B cell (primary cell): ENCODE measurements at regions of chr12 and their contacts with region 1.

Region 1: GRCh38 chr12:69900720-69901131 is 75.7 kb downstream of the MYRFL start:
- DNase-seq: peak; percentile 75
- ATAC-seq: no peak
- H3K4me3 ChIP-seq: no peak overlapping the region
- H3K4me3 Mint-ChIP-seq: no peak overlapping the region
- H3K27ac ChIP-seq: no peak overlapping the region
- H3K27ac Mint-ChIP-seq: no peak overlapping the region
- H3K4me1 ChIP-seq: peaks cover 0 to 5% of the 10 kb centered on the region in 2 donors
- H3K4me1 Mint-ChIP-seq: peaks cover 3% of the 10 kb centered on the region
- H3K27me3 ChIP-seq: no peaks in the 10 kb centered on the region
- H3K27me3 Mint-ChIP-seq: peaks cover 3% of the 10 kb centered on the region
- CTCF ChIP-seq: peak; percentile 92

Region 2: DNA sequence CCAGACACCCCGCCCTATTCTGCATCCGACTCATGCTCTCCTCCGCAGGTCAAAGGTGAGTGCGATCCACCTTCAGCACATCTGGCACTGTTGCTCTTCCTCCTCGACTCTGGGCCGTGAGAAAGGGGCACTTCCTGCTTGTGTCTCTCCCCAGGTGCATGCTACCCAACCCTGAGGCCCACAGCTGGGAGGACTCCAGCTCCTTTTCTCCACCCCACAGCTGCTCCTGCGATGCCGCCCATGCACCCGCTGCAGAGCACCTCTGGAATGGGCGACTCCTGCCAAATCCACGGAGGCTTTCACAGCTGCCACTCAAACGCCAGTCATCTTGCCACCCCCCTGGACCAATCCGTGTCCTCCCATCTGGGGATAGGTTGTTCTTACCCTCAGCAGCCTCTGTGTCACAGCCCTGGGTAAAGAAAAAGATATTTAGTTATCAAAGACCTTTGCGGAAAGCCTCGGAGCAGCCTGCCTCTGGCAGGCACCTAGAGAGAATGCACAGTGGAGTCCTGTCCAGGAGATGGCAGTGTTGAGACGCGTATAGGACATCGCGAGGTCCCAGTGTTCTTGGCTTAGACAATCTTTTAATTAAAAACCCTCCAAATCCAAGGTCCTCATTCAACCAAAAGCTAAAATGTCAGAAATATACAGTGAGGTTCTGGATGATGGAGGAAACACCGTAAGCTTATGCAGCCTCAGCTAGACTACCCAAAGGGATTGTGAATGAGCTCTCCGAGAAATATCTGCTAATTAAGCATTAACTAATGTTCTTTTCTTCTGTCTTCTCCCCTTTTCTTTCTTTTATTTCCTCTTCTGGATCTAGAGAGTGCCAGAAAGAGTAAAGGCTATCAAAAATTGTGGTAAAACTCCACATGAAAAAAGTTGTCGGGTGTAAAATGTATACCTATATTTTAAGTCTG is 21.4 kb before region 1 on chr12:
- CTCF ChIA-PET with region 1: interaction called, 28 read pairs
- POLR2A ChIA-PET with region 1: no interaction called
- intact Hi-C with region 1: no loop called
- DNase-seq: peak; percentile 74
- ATAC-seq: peak; percentile 82
- H3K4me3 ChIP-seq: no peak overlapping the region
- H3K4me3 Mint-ChIP-seq: no peak overlapping the region
- H3K27ac ChIP-seq: no peak overlapping the region
- H3K27ac Mint-ChIP-seq: peak overlapping the region; percentile 50
- H3K4me1 ChIP-seq: peaks cover 4% of the 10 kb centered on the region in 2 donors
- H3K4me1 Mint-ChIP-seq: peaks cover 5% of the 10 kb centered on the region
- H3K27me3 ChIP-seq: peaks cover 0 to 9% (median 2%) of the 10 kb centered on the region in 4 experiments
- H3K27me3 Mint-ChIP-seq: peaks cover 27% of the 10 kb centered on the region
- CTCF ChIP-seq: peak; percentile 89

Region 3: DNA sequence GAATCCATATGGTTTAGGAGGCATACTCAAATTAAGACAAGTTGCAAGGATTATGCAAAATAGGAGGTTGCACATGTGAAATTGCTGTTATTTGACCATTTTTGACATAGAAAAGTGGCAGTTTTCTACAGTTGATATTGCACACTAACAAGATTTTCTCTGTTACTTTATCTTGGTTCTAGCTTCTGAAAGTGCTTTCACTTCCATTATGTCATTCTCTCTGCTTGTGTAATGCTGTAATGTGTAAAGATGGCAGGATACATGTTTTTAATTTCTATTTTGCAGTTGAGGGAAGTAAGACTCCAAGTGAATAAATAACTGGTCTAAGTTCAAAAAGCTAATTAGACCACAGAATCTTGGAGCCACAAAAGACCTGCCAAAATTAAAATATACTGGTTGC is 15.1 kb before region 1 on chr12:
- CTCF ChIA-PET with region 1: interaction called, 28 read pairs
- POLR2A ChIA-PET with region 1: no interaction called
- intact Hi-C with region 1: no loop called
- DNase-seq: no peak
- ATAC-seq: no peak
- H3K4me3 ChIP-seq: no peak overlapping the region
- H3K4me3 Mint-ChIP-seq: no peak overlapping the region
- H3K27ac ChIP-seq: no peak overlapping the region
- H3K27ac Mint-ChIP-seq: no peak overlapping the region
- H3K4me1 ChIP-seq: no peaks in the 10 kb centered on the region
- H3K4me1 Mint-ChIP-seq: no peaks in the 10 kb centered on the region
- H3K27me3 ChIP-seq: no peaks in the 10 kb centered on the region
- H3K27me3 Mint-ChIP-seq: peaks cover 3% of the 10 kb centered on the region
- CTCF ChIP-seq: no peak

Region 4: GRCh38 chr12:70242695-70243509 is 342.2 kb after region 1 on chr12 and contains the start of gene CNOT2:
- CTCF ChIA-PET with region 1: no interaction called
- POLR2A ChIA-PET with region 1: no interaction called
- intact Hi-C with region 1: no loop called
- DNase-seq: peak; percentile 93
- ATAC-seq: peak; percentile 88
- H3K4me3 ChIP-seq: peak within 1 kb of the TSS; percentile 75 to 92 (median 85)
- H3K4me3 Mint-ChIP-seq: peak within 1 kb of the TSS; percentile 96
- H3K27ac ChIP-seq: peak within 1 kb of the TSS; percentile 95 to 98
- H3K27ac Mint-ChIP-seq: peak within 1 kb of the TSS; percentile 97
- H3K4me1 ChIP-seq: peaks cover 20 to 33% of the 10 kb centered on the region in 2 donors
- H3K4me1 Mint-ChIP-seq: peaks cover 57% of the 10 kb centered on the region
- H3K27me3 ChIP-seq: no peaks in the 10 kb centered on the region
- H3K27me3 Mint-ChIP-seq: no peaks in the 10 kb centered on the region
- CTCF ChIP-seq: no peak
- total RNA-seq, gene CNOT2: 115 and 120 TPM in 2 replicates

Region 5: GRCh38 chr12:70576346-70577282 is 675.9 kb after region 1 on chr12:
- CTCF ChIA-PET with region 1: interaction called, 117 read pairs
- POLR2A ChIA-PET with region 1: no interaction called
- intact Hi-C with region 1: loop called (anchors 1 kb)
- DNase-seq: peak; percentile 66
- ATAC-seq: peak; percentile 43
- H3K4me3 ChIP-seq: no peak overlapping the region
- H3K4me3 Mint-ChIP-seq: no peak overlapping the region
- H3K27ac ChIP-seq: no peak overlapping the region
- H3K27ac Mint-ChIP-seq: no peak overlapping the region
- H3K4me1 ChIP-seq: no peaks in the 10 kb centered on the region
- H3K4me1 Mint-ChIP-seq: no peaks in the 10 kb centered on the region
- H3K27me3 ChIP-seq: peaks cover 0 to 2% (median 0%) of the 10 kb centered on the region in 4 experiments
- H3K27me3 Mint-ChIP-seq: peaks cover 4% of the 10 kb centered on the region
- CTCF ChIP-seq: peak; percentile 78

Region 6: DNA sequence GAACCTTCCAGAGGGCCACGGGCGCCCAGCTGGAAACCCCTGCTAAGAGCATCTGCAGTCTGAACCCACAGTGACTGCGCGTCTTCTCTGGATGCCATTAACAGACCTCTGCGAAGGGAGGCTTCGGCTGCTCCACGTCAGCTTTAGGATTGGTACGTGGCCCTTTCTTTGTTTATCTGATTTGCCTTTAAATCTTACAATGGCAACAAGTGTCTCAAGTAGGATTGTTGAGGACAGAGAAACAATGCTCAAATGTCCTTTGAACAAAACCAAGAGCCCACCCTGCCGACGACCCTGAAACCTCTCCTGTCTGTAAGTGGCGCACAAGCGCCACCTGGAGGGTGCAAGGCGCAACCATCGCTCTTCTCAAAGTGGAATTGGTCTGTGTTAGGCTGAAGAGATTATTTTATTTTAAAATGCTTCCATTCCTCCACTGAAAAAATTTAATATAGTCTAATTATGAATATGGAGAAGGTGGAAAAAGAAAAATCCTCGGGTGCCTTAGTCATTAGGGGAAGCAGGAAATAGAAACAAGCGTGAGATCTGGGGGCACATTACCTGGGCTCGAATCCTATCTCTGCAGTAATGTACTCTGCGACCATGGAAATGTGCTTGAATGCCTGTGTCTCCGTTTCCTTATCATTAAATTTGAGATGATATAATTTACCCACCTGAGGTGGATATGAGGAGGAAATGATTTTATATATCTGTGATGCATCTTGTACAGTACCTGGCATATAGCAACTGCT is 819.1 kb after region 1 on chr12:
- CTCF ChIA-PET with region 1: interaction called, 6 read pairs
- POLR2A ChIA-PET with region 1: no interaction called
- intact Hi-C with region 1: loop called (anchors 2 kb)
- DNase-seq: peak; percentile 35
- ATAC-seq: no peak
- H3K4me3 ChIP-seq: no peak overlapping the region
- H3K4me3 Mint-ChIP-seq: no peak overlapping the region
- H3K27ac ChIP-seq: no peak overlapping the region
- H3K27ac Mint-ChIP-seq: no peak overlapping the region
- H3K4me1 ChIP-seq: no peaks in the 10 kb centered on the region
- H3K4me1 Mint-ChIP-seq: peaks cover 4% of the 10 kb centered on the region
- H3K27me3 ChIP-seq: peaks cover 0 to 2% (median 0%) of the 10 kb centered on the region in 4 experiments
- H3K27me3 Mint-ChIP-seq: peaks cover 20% of the 10 kb centered on the region
- CTCF ChIP-seq: peak; percentile 74

Region 7: DNA sequence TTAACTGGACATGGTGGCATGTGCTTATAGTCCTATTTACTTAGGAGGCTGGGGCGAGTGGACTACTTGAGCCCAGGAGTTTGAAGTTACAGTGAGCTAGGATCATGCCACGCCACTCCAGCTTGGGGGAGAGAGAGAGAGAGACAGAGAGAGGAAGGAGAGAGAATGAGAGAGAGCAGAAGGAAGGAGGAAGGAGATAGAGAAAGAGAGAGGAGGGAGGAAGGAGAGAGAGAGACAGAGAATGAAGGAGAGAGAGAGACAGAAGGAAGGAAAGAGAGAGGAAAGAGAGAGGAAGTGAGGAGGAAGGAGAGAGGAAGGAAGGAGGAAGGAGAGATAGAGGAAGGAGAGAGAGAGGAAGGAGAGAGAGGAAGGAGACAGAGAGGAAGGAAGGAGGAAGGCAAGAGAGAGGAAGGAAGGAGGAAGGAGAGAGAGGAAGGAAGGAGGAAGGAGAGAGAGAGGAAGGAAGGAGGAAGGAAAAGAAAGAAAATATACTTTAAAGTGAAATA is 830.0 kb after region 1 on chr12:
- CTCF ChIA-PET with region 1: interaction called, 21 read pairs
- POLR2A ChIA-PET with region 1: no interaction called
- intact Hi-C with region 1: no loop called
- DNase-seq: no peak
- ATAC-seq: no peak
- H3K4me3 ChIP-seq: no peak overlapping the region
- H3K4me3 Mint-ChIP-seq: no peak overlapping the region
- H3K27ac ChIP-seq: no peak overlapping the region
- H3K27ac Mint-ChIP-seq: no peak overlapping the region
- H3K4me1 ChIP-seq: no peaks in the 10 kb centered on the region
- H3K4me1 Mint-ChIP-seq: no peaks in the 10 kb centered on the region
- H3K27me3 ChIP-seq: no peaks in the 10 kb centered on the region
- H3K27me3 Mint-ChIP-seq: peaks cover 6% of the 10 kb centered on the region
- CTCF ChIP-seq: no peak